ENCODE measurements at regions of chr1 and their contacts with region 1.

Region 1: GRCh38 chr1:31663622-31664452 is 19.2 kb upstream of the PEF1 start:
- DNase-seq: peak; percentile 56 to 82 (median 81)
- ATAC-seq: peak; percentile 31 to 56
- H3K4me3 ChIP-seq: no peak overlapping the region
- H3K27ac ChIP-seq: no peak overlapping the region
- H3K4me1 ChIP-seq: peaks cover 6% of the 10 kb centered on the region
- H3K27me3 ChIP-seq: no peaks in the 10 kb centered on the region

Region 2: GRCh38 chr1:31218705-31219104 is 445.1 kb before region 1 on chr1:
- intact Hi-C with region 1: no loop called
- DNase-seq: no peak
- ATAC-seq: no peak
- H3K4me3 ChIP-seq: no peak overlapping the region
- H3K27ac ChIP-seq: no peak overlapping the region
- H3K4me1 ChIP-seq: peaks cover 4% of the 10 kb centered on the region
- H3K27me3 ChIP-seq: no peaks in the 10 kb centered on the region

Region 3: GRCh38 chr1:31327381-31327780 is 336.5 kb before region 1 on chr1:
- intact Hi-C with region 1: no loop called
- DNase-seq: no peak
- ATAC-seq: no peak
- H3K4me3 ChIP-seq: no peak overlapping the region
- H3K27ac ChIP-seq: no peak overlapping the region
- H3K4me1 ChIP-seq: peaks cover 3% of the 10 kb centered on the region
- H3K27me3 ChIP-seq: no peaks in the 10 kb centered on the region

Region 4: DNA sequence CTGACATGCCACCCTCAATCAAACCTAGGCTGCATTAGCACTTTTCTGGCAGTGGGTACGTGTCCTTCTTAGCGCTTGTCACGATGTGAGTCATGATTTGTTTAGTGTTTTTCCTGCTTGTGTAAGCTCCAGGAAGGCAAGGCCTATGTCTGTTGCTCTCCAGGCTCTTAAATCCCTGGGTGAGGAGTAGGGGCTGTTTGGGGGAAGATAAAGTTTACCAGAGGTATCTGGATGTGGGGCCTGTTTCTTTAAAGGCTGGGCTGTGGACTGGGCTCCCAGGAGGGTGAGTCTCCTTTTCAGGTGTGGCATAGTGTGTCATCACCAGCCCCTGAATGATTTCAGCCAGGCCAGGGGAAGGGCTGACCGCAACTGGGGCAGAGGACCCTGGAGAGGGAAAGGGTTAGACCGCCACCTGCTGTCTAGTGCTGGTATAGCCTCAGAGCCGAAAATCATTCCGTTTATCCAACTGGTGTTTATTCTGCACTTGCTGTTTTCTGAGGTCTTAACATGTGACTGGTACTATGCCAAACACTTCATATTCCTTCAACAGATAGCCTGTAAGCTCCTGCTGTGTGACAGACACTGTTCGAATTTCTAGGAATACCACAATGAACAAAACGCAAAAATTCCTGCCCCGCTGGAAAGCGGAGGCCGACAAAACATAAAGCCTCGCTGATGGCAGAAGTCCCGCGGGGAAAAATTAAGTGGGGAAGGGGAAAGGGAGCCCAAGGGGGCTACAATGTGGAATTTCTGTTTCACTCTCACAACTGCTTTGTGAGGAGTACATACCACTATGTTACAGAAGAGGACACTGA is 241.1 kb before region 1 on chr1:
- intact Hi-C with region 1: no loop called
- DNase-seq: peak; percentile 56 to 79 (median 77)
- ATAC-seq: peak; percentile 61 to 84
- H3K4me3 ChIP-seq: no peak overlapping the region
- H3K27ac ChIP-seq: no peak overlapping the region
- H3K4me1 ChIP-seq: no peaks in the 10 kb centered on the region
- H3K27me3 ChIP-seq: no peaks in the 10 kb centered on the region

Region 5: GRCh38 chr1:31467005-31467700 is 196.7 kb before region 1 on chr1:
- intact Hi-C with region 1: no loop called
- DNase-seq: no peak
- ATAC-seq: no peak
- H3K4me3 ChIP-seq: no peak overlapping the region
- H3K27ac ChIP-seq: no peak overlapping the region
- H3K4me1 ChIP-seq: no peaks in the 10 kb centered on the region
- H3K27me3 ChIP-seq: no peaks in the 10 kb centered on the region

Region 6: GRCh38 chr1:31715087-31715872 is 51.4 kb after region 1 on chr1:
- intact Hi-C with region 1: loop called in 2 of 4 experiments (anchors 5 to 10 kb)
- DNase-seq: peak; percentile 97 to 99 (median 99)
- ATAC-seq: peak; percentile 96 to 97
- H3K4me3 ChIP-seq: peak overlapping the region; percentile 41
- H3K27ac ChIP-seq: peak overlapping the region; percentile 97
- H3K4me1 ChIP-seq: peaks cover 8% of the 10 kb centered on the region
- H3K27me3 ChIP-seq: no peaks in the 10 kb centered on the region

Region 7: GRCh38 chr1:31745096-31745945 is 81.5 kb after region 1 on chr1:
- intact Hi-C with region 1: loop called in 1 of 4 experiments (anchors 10 kb)
- DNase-seq: peak; percentile 66 to 88 (median 87)
- ATAC-seq: peak; percentile 64 to 65
- H3K4me3 ChIP-seq: no peak overlapping the region
- H3K27ac ChIP-seq: no peak overlapping the region
- H3K4me1 ChIP-seq: peaks cover 6% of the 10 kb centered on the region
- H3K27me3 ChIP-seq: no peaks in the 10 kb centered on the region

Measured in right cardiac atrium (tissue), 5 donors.